PC-9 (cell line): ENCODE measurements at regions of chr7 and their contacts with region 1.

Region 1: DNA sequence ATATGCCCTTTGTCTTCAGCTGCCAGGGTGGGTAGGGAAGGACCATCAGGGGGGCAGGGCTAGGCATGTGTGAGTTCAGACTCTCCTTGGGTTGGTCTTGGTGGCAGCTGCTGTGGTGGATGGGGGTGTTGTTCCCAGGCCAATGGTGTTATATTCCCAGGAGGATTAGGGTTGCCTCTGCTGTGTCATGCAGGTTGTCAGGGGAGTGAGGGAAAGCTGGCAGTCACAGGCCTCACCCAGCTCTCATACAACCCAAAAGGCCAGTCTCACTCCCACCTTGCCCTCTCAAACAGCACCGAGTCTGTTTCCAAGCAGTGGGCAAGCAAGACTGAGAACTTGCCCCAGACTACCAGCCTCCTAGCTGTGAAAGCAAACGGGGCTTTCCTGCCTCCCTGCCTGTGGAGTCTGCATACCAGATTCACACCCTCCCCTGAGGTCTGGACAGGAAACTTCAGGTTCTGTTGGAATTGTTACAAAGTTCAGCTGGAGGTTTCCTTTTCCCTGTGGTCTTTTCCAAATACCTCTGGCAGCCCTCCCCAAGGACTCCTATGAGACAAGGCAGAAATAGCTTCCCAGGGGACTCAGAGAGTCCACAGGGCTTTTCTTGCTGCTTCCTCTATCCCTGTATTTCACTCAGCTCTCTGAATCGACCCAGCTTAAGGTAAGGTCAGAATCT is 1.4 kb downstream of the HYAL4 start:
- DNase-seq: peak; percentile 45 to 71
- H3K4me3 ChIP-seq: no peak overlapping the region
- H3K27ac ChIP-seq: peak overlapping the region; percentile 73
- H3K4me1 ChIP-seq: peaks cover 39% of the 10 kb centered on the region
- H3K27me3 ChIP-seq: no peaks in the 10 kb centered on the region
- CTCF ChIP-seq: no peak

Region 2: DNA sequence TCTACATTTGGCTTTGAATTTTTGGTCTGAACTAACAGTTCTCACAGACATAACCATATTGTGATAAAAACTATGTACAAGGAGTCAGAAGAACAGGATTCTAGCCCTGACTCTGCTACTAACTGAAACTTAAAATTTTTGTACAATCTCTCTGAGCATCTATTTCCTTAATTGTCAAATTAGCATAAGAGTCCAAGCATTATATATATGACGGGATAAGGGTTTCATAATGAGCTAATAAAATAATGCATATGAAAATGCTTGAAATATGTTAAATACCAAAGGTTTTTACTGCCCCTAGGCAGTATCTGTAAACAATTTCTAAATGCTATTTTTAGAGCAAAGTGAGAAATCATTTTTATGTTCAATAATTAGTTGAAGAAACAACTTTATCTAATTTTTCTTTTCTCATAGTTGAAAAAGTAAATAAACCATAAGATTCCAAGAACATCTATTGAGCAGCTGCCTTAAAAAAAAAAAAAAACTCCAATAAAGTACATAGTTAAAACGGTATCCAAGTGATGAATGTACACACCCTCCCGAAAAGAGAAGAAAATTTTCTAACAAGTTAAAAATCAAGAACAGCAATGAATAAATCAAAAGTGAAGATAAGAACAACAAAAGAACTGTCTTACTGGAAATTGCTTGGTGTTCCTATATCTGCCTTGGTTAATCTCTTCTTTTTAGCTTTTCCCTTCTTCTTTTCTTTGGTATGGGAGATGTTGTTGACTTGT is 150.2 kb before region 1 on chr7:
- CTCF ChIA-PET with region 1: no interaction called
- POLR2A ChIA-PET with region 1: interaction called, 17 read pairs
- intact Hi-C with region 1: no loop called
- DNase-seq: no peak
- H3K4me3 ChIP-seq: no peak overlapping the region
- H3K27ac ChIP-seq: no peak overlapping the region
- H3K4me1 ChIP-seq: no peaks in the 10 kb centered on the region
- H3K27me3 ChIP-seq: no peaks in the 10 kb centered on the region
- CTCF ChIP-seq: no peak